HCT116 (cell line): ENCODE measurements at regions of chr2 and their contacts with region 1.

Region 1: GRCh38 chr2:210195101-210195852 is 24.1 kb upstream of the KANSL1L start:
- DNase-seq: peak; percentile 38
- ATAC-seq: peak; percentile 77
- H3K4me3 ChIP-seq: peak overlapping the region; percentile 37 to 50
- H3K27ac ChIP-seq: no peak overlapping the region
- H3K4me1 ChIP-seq: peaks cover 0 to 5% of the 10 kb centered on the region in 2 experiments; a peak in 1 of 4 replicates
- H3K27me3 ChIP-seq: no peaks in the 10 kb centered on the region
- CTCF ChIP-seq: peak; percentile 48 to 85 (median 75); a peak in 5 of 6 replicates
- POLR2A ChIP-seq: no peak
- RAD21 ChIP-seq: peak; percentile 86

Region 2: DNA sequence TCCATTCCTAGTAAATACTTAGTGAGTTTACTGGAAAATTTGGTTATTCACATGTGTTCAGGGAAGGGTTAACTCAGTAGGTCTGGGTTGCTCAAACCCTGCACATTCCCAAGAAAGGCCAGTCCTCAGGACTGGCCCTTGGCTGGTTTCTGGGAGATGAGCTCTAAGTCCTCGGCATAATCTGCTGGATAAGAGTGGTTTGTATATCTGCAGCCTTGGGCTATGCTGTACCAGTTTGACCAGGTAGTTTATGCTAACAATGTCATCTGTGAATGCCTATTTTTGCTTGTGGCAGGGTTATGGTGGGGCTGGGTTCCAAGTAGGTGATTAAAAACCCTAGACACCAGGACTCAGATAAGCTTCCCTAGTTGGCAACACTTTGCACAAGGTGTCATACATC is 1796.1 kb before region 1 on chr2:
- CTCF ChIA-PET with region 1: no interaction called
- POLR2A ChIA-PET with region 1: no interaction called
- RAD21 ChIA-PET with region 1: no interaction called
- intact Hi-C with region 1: loop called (anchors 5 kb)
- DNase-seq: no peak
- ATAC-seq: no peak
- H3K4me3 ChIP-seq: no peak overlapping the region
- H3K27ac ChIP-seq: no peak overlapping the region
- H3K4me1 ChIP-seq: no peaks in the 10 kb centered on the region
- H3K27me3 ChIP-seq: peaks cover 9% of the 10 kb centered on the region; the same call in 1 of the 2 replicates
- CTCF ChIP-seq: no peak
- POLR2A ChIP-seq: no peak
- RAD21 ChIP-seq: no peak

Region 3: DNA sequence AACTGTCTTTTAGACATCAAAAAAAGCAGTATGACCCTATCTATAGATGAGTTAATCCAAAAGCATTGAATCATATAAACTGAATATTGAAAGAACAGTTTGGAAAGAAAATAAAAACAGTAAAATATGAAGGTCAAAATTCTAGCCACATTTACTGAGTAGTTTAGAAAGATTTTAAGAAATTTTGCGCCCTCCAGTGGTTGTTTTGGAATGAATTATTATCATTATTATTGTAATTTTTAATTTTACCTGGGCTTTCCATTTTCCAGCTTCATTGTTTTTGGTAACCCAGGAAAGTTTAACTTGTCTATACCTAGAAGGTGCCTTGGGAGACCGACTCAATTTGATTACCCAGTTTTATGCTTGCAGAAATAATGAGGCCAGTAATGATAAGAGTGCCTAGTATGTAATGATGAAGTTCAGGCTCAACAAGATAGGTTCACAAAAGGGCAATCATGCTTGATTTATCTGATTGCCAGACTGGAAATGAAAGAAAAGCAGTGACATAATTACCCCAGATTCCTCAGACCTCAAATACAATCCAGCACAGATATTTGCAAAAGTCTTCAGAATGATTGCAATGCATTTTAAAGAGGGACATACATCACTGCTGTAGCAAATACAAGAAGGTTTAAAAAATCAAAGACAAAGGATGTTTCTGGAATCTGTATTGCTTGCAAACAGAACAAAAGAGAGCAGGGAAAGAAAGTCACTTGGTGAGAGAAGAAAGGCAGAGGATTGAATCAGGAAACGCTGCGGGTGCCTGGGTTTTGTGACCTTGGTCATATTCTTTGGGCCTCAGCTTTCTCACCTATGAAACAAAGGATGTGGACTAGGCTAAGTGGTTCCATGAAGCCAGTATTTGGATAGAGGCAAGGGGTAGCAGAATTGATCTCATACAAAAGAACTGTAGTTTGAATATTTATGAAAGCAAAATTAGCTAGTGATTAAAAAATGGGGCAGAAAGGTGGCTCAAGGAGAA is 617.6 kb before region 1 on chr2:
- CTCF ChIA-PET with region 1: interaction called, 5 read pairs
- POLR2A ChIA-PET with region 1: no interaction called
- RAD21 ChIA-PET with region 1: no interaction called
- intact Hi-C with region 1: loop called (anchors 10 kb)
- DNase-seq: peak; percentile 6
- ATAC-seq: no peak
- H3K4me3 ChIP-seq: no peak overlapping the region
- H3K27ac ChIP-seq: no peak overlapping the region
- H3K4me1 ChIP-seq: no peaks in the 10 kb centered on the region
- H3K27me3 ChIP-seq: no peaks in the 10 kb centered on the region
- CTCF ChIP-seq: peak in 2 of 3 experiments; percentile 51 to 60; a peak in 3 of 6 replicates
- POLR2A ChIP-seq: no peak
- RAD21 ChIP-seq: peak; percentile 59

Region 4: GRCh38 chr2:209977386-209978239 is 217.7 kb before region 1 on chr2:
- CTCF ChIA-PET with region 1: interaction called, 13 read pairs
- POLR2A ChIA-PET with region 1: no interaction called
- RAD21 ChIA-PET with region 1: interaction called, 3 read pairs
- intact Hi-C with region 1: loop called (anchors 1 kb)
- DNase-seq: peak; percentile 28
- ATAC-seq: peak; percentile 52; the same call in 1 of the 2 replicates
- H3K4me3 ChIP-seq: no peak overlapping the region
- H3K27ac ChIP-seq: no peak overlapping the region
- H3K4me1 ChIP-seq: no peaks in the 10 kb centered on the region
- H3K27me3 ChIP-seq: no peaks in the 10 kb centered on the region
- CTCF ChIP-seq: peak in 2 of 3 experiments; percentile 65 to 77; a peak in 3 of 6 replicates
- POLR2A ChIP-seq: no peak
- RAD21 ChIP-seq: peak; percentile 86

Region 5: GRCh38 chr2:210162466-210163124 is 32.7 kb before region 1 on chr2:
- CTCF ChIA-PET with region 1: no interaction called
- POLR2A ChIA-PET with region 1: no interaction called
- RAD21 ChIA-PET with region 1: no interaction called
- intact Hi-C with region 1: no loop called
- DNase-seq: no peak
- ATAC-seq: no peak
- H3K4me3 ChIP-seq: no peak overlapping the region
- H3K27ac ChIP-seq: no peak overlapping the region
- H3K4me1 ChIP-seq: peaks cover 12% of the 10 kb centered on the region in 2 experiments
- H3K27me3 ChIP-seq: no peaks in the 10 kb centered on the region
- CTCF ChIP-seq: no peak
- POLR2A ChIP-seq: no peak
- RAD21 ChIP-seq: no peak

Region 6: DNA sequence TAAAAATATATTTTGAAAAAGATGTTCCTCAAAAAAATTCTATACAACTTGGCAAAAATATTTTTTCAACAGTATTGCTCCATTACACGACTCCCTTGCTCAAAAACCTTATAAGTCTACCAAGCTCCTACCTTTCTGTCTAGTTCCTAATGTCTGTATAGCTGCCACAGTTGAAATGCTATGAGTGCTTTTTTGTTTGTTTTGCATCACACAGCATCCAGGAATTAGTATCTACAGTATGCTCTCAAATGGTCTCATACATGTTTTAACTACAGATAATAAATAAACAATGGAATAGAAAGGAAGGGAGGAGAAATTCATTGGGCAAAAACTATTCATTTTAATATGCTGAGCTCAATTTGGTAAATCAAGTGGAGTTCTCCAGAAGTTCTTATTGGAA is 12.7 kb after region 1 on chr2:
- CTCF ChIA-PET with region 1: interaction called, 11 read pairs
- POLR2A ChIA-PET with region 1: no interaction called
- RAD21 ChIA-PET with region 1: no interaction called
- intact Hi-C with region 1: no loop called
- DNase-seq: no peak
- ATAC-seq: no peak
- H3K4me3 ChIP-seq: no peak overlapping the region
- H3K27ac ChIP-seq: no peak overlapping the region
- H3K4me1 ChIP-seq: no peaks in the 10 kb centered on the region
- H3K27me3 ChIP-seq: no peaks in the 10 kb centered on the region
- CTCF ChIP-seq: no peak
- POLR2A ChIP-seq: no peak
- RAD21 ChIP-seq: no peak